GM12878 (cell line): ENCODE measurements at regions of chr6 and their contacts with region 1.

Region 1: DNA sequence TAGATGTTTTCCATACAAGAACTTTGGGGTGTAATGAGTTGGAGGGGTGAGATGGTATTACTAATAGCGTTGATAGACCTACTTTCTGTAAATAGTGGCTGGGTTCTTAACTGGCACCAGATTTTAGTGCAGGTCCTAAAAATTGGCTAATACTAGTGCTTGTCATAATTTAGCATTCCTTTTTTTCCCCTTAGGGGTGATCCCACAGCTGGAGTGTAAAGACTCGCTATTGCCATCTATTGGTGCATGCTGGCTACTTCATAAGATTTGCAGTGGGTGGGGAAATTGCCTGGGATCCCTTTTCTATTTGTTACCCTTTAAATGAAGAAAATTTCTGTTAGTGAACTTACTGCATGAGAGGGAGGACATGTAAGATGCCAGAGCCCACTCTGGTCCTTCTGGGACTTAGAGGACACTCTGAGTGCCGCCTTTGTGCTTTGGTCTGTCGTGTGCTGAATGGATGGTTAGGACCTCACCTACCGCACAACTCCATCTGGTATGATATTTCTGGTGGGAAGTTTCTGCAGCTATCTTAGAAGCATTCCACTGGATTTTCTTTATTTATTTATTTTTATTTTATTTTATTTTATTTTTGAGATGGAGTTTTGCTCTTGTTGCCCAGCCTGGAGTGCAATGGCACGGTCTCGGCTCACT is 195.5 kb downstream of the JARID2 start:
- DNase-seq: no peak
- ATAC-seq: peak; percentile 74
- H3K4me3 ChIP-seq: no peak overlapping the region
- H3K27ac ChIP-seq: no peak overlapping the region
- H3K4me1 ChIP-seq: peaks cover 29% of the 10 kb centered on the region
- H3K27me3 ChIP-seq: no peaks in the 10 kb centered on the region
- CTCF ChIP-seq: peak; percentile 79 to 83 (median 79)
- EP300 ChIP-seq: no peak
- POLR2A ChIP-seq: no peak
- RAD21 ChIP-seq: peak; percentile 87

Region 2: GRCh38 chr6:15458021-15458459 is 16.7 kb after region 1 on chr6:
- CTCF ChIA-PET with region 1: interaction called, 22 read pairs
- POLR2A ChIA-PET with region 1: interaction called, 8 read pairs
- RAD21 ChIA-PET with region 1: interaction called, 17 read pairs
- SMC1A ChIA-PET with region 1: interaction called, 30 read pairs
- in situ Hi-C with region 1: no loop called
- intact Hi-C with region 1: no loop called
- DNase-seq: peak; percentile 40
- ATAC-seq: peak; percentile 95
- H3K4me3 ChIP-seq: peak overlapping the region; percentile 9; the same call in 1 of the 2 replicates
- H3K27ac ChIP-seq: peak overlapping the region; percentile 37
- H3K4me1 ChIP-seq: peaks cover 17% of the 10 kb centered on the region
- H3K27me3 ChIP-seq: no peaks in the 10 kb centered on the region
- CTCF ChIP-seq: no peak
- EP300 ChIP-seq: 0 out of 4 replicates have a peak, but pooled peaks of 1 of the 2 experiments have one; percentile 35
- POLR2A ChIP-seq: no peak
- RAD21 ChIP-seq: no peak